ENCODE measurements at regions of chr9 and their contacts with region 1.

Region 1: DNA sequence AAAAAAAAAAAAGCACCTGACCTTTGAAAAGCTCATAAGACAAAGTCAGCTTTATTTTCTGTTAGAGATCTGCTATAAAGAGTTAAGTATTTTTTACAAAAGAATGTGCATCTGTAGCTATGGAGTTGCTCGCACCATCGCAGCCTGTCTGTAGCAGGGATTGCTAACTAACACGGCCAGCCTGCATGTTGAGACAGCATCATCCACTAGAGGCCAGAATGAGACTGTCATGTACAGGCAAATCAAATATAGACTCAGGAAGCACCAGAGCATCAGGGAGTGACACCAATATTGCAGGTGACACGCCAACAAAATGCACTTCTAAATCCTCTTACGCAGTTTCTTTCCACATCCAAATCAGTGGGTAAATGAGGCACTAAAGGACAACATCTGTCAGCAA is 136.3 kb upstream of the RASEF start:
- DNase-seq: no peak
- ATAC-seq: peak; percentile 85

Region 2: GRCh38 chr9:82397534-82397933 is 801.7 kb before region 1 on chr9:
- intact Hi-C with region 1: no loop called
- DNase-seq: no peak
- ATAC-seq: no peak

Region 3: DNA sequence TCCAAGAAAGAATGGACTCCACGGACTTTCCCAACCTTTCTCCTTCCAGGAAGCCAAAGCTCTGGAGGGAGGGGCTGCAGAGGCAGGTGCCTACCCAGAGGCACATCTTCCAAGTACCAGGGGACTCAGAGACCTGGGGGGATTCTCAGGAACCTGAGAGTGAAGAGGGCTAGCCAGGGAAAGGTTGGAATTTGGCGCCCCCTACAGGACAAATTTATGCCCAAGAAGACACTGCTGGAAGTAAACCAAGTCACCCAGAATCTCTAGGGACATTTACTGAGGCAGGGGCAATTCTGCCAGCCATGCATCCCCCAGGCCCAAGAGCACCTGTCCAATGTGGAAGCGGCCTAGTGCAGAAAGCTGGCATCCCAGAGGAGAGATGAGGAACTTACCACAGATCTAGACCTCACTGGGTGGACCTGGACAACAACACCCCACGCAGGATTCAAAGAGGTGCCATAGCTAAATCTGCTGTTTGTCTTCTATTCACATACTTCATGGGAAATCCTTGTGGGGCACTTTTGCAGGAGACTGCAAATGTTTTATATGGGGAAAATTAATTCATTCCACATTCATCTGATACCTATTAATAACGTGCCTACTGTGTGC is 397.8 kb after region 1 on chr9:
- intact Hi-C with region 1: loop called (anchors 1 kb)
- DNase-seq: no peak
- ATAC-seq: no peak

Region 4: DNA sequence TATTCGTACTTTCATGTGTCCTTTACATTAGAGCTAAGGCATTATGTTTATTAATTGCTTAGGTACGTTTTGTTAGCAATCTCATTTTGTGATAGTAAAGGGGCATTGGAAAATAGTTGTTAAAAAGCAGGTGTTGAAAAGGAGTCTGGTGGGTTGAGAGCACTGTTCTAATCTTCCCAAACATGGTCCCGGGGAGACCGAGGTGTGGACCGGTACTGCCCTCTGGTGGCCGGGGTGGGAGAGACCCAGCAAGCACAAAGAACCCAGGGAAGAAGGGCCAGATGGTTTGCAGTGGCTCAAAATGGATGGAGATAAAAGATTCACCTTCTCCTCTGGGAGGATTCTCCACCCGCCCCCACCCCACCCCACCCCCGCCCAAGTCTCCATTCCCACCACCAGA is 449.8 kb after region 1 on chr9:
- intact Hi-C with region 1: loop called (anchors 5 kb)
- DNase-seq: peak; percentile 83
- ATAC-seq: peak; percentile 72